ENCODE measurements at regions of chr10 and their contacts with region 1.

Region 1: DNA sequence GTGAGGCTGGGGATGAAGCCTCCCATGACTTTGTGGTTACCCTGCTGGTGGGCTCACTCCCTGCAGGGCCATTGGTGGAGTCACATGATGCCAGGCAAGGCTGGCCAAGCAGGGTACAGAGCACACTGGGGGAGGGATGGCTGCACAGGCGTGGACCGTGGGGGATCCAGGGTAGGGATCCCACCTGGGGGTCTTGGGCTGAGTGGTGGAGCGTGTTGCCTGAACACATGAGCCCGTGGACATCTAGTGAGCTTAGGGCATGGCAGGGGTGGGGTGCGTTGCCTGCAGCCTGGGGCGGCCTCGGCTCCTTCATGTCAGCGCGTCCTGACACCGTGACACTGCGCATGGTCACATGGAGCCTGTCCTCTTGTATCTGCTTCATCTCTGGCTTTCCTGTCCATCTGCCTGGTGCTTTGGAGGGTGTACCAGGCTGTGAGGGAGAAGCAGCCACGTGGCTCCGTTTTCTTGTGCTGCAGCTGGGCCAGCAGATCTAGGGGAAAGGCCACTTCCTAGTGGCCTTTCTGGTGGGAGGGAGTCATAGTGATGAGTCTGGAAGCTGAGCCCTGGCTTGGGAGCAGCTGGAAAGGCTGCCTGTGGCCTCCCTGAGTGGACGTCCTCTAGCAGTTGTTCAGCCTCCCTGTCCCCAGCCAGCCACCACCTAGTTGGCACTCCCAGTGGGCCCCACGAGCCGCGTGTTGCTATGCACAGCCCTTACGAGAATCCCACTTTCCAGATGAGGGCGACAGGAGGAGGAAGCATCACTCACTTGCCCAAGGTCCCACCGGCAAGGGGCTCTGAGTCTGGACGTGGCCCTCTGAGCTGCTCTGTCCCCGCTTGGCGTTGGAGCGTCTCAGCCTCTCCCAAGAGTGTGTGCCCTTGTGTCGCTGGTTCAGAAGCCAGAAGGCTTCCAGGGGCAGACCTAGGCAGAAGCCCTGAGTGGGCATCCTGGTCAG is 96.3 kb downstream of the LHPP start:
- DNase-seq: peak; percentile 46
- H3K4me3 ChIP-seq: no peak overlapping the region
- H3K27ac ChIP-seq: peak overlapping the region; percentile 51 to 93
- H3K4me1 ChIP-seq: peaks cover 52% of the 10 kb centered on the region
- H3K27me3 ChIP-seq: no peaks in the 10 kb centered on the region
- CTCF ChIP-seq: no peak
- POLR2A ChIP-seq: no peak

Region 2: GRCh38 chr10:124626759-124627380 is 68.9 kb after region 1 on chr10:
- intact Hi-C with region 1: loop called (anchors 10 kb)
- DNase-seq: no peak
- H3K4me3 ChIP-seq: no peak overlapping the region
- H3K27ac ChIP-seq: peak overlapping the region; percentile 5 to 38
- H3K4me1 ChIP-seq: peaks cover 74% of the 10 kb centered on the region
- H3K27me3 ChIP-seq: no peaks in the 10 kb centered on the region
- CTCF ChIP-seq: no peak
- POLR2A ChIP-seq: no peak

Region 3: GRCh38 chr10:124697830-124698544 is 140.1 kb after region 1 on chr10:
- intact Hi-C with region 1: no loop called
- DNase-seq: no peak
- H3K4me3 ChIP-seq: no peak overlapping the region
- H3K27ac ChIP-seq: peak overlapping the region; percentile 75 to 81
- H3K4me1 ChIP-seq: peaks cover 70% of the 10 kb centered on the region
- H3K27me3 ChIP-seq: no peaks in the 10 kb centered on the region
- CTCF ChIP-seq: no peak
- POLR2A ChIP-seq: no peak

Measured in testis (tissue), 5 donors.